A549 (cell line): ENCODE measurements at regions of chr22 and their contacts with region 1.

Region 1: DNA sequence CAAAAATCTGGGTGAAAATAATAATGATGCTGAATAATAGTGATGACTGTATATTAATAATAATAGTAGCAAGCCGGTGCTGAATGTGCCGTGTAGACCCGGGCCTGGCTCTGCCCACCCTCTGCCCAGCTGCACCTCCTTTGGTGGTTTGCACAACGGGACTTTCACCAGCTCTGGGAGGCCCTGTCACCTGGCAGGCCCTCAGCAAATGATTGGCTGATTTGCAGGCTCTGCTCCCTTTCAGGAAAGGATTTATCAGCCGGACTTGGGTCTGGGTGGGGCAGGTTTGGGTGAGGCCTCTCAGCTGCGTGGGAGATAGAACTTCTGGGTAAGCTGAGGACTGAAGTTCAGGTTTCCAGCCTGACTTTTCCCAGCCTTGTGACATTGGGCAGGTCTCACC is 21.4 kb downstream of the KIAA1671 start:
- DNase-seq: no peak
- ATAC-seq: no peak
- H3K4me3 ChIP-seq: no peak overlapping the region
- H3K27ac ChIP-seq: no peak overlapping the region
- H3K4me1 ChIP-seq: peaks cover 28% of the 10 kb centered on the region; the same call in 2 of the 3 replicates
- CTCF ChIP-seq: no peak
- EP300 ChIP-seq: no peak
- POLR2A ChIP-seq: no peak
- RAD21 ChIP-seq: no peak

Region 2: DNA sequence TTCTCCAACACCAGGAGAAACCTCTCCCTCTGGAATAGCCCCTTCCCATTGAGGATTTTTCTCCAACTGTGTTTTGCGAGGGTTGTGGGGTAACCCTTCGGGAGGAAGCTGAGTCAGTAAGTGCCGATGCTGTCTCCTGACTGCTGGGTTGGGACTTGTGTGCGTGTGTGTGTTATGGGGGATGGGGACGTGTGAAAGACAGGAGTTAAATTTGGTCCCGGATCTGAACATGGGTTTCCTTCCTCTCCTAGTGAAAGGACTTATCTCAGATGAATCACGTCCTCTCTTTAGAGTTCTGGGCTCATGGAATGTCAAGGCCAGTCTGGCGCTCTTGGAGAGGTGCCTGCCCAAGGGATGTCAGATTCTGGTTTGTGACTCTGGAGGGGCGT is 11.9 kb after region 1 on chr22:
- CTCF ChIA-PET with region 1: no interaction called
- POLR2A ChIA-PET with region 1: no interaction called
- DNase-seq: no peak
- ATAC-seq: no peak
- H3K4me3 ChIP-seq: no peak overlapping the region
- H3K27ac ChIP-seq: peak overlapping the region in 1 of 2 experiments; percentile 52; a peak in 1 of 6 replicates
- H3K4me1 ChIP-seq: peaks cover 32% of the 10 kb centered on the region
- CTCF ChIP-seq: no peak
- EP300 ChIP-seq: no peak
- POLR2A ChIP-seq: no peak
- RAD21 ChIP-seq: no peak

Region 3: DNA sequence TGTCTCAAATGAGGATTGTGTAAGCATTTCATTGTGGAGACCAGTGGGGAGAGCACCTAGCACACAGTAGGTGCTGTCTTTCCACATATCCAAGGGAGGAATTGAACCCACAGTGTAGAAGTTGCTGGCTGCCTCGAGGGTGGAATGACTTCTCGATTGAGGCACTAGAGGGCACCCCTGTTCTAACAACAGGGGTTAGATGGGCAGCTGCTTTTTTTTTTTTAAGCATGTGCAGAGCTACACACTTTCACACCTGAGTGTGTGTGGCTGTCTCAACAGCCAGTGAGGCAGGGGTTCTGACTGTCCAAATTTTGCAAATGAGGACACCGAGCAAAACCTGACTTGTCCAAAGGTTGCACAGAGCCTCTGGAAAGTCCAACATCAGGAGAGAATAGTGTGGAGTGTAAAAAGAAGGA is 107.5 kb after region 1 on chr22:
- CTCF ChIA-PET with region 1: no interaction called
- POLR2A ChIA-PET with region 1: no interaction called
- DNase-seq: peak; percentile 29 to 49
- ATAC-seq: peak in 1 of 2 experiments; percentile 71; a peak in 3 of 6 replicates
- H3K4me3 ChIP-seq: no peak overlapping the region
- H3K27ac ChIP-seq: no peak overlapping the region
- H3K4me1 ChIP-seq: peaks cover 7% of the 10 kb centered on the region; the same call in 1 of the 3 replicates
- CTCF ChIP-seq: peak; percentile 45
- EP300 ChIP-seq: no peak
- POLR2A ChIP-seq: no peak
- RAD21 ChIP-seq: peak; percentile 51 to 60

Region 4: DNA sequence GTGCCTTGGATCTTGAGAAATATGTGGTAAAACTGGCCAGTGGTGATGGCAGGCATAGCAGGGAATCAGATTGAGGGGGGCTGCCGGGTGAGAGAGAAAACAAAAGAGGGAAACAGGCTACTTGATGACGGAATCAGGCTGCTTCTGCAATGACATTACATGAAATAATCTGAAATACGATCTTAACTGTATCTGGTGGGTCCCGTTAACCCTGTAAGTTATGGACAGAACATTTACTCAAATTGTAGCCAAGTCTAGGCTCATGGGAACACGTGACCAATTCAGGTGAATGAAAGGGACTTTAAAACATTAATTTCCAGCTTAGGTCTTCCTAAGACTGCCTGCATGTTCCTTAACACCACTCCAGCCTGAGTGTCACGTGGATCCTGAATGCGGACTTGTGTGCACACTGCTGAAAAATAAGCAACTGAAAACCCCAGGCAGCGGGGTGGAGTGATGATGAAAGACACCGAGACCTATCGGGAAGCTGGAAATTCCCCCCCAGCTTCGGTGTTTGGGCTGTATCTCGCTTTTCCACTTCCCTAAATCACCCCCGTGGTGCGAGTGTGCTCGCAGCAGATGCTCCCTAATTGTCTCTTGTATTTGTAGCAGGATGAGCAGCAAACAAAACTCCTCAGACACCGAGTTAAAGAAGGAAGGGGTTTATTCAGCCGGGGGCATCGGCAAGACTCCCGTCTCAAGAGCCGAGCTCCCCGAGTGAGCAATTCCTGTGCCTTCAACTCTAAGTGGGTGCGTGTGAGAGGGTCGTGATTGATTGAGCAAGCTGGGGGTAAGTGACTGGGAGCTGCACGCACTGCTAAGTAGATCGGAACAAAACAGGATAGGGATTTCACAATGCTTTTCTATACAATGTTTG is 445.6 kb after region 1 on chr22:
- CTCF ChIA-PET with region 1: no interaction called
- POLR2A ChIA-PET with region 1: interaction called, 10 read pairs
- DNase-seq: no peak
- ATAC-seq: no peak
- H3K4me3 ChIP-seq: no peak overlapping the region
- H3K27ac ChIP-seq: no peak overlapping the region
- H3K4me1 ChIP-seq: no peaks in the 10 kb centered on the region
- CTCF ChIP-seq: no peak
- EP300 ChIP-seq: no peak
- POLR2A ChIP-seq: no peak
- RAD21 ChIP-seq: no peak